ENCODE measurements at regions of chr1 and their contacts with region 1.

Region 1: DNA sequence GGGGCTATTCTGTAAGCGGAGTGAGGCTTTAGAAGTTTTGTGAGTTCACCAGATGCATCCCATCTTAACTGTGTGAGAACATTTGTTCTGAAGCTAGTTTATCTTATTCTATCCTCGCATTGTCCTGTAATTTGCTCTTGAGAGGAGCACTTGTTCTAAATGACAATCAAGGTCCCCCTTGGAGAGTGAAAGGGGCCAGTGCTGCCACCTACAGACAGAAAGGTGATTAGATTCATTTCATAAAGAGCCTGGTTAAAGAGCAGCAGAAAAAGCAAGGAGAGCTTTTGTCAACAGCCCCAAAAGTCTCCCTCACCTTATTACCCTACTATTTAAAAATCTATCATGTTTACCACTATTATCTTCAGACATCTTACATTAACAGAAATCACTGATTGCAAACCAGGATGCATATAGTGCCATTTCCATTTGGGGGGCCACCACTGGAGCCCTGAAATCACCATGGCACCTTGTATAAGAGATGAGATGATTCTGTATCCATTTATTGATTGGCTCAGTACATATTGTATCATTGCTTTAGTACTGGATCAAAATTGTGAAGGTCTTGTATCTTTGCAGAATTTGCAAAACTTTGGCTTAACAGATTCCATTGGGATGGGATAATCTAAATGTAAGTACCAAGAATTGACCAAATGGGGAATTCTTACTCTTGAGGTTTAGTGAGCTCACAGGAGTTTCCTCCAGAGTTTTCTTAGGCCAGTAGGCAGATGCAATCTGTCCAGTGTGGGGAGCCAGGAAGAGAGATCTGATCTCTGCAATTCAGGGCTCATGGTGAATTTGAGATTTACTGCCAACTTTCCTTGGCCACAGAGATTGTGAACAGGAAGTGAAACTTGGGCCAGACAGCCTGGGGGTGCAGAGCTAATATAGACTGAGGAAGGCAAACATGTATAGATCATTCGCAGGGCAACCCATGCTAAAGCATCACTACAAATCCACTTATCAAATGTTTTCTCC is 64.3 kb upstream of the TRABD2B start:
- DNase-seq: no peak
- H3K4me3 ChIP-seq: no peak overlapping the region
- H3K27ac ChIP-seq: no peak overlapping the region
- H3K4me1 ChIP-seq: peaks cover 0 to 12% (median 2%) of the 10 kb centered on the region in 6 donors
- H3K27me3 ChIP-seq: peaks cover 0 to 6% (median 0%) of the 10 kb centered on the region in 7 donors
- CTCF ChIP-seq: peak in 8 of 11 experiments; percentile 16 to 68 (median 52)
- POLR2A ChIP-seq: no peak

Region 2: DNA sequence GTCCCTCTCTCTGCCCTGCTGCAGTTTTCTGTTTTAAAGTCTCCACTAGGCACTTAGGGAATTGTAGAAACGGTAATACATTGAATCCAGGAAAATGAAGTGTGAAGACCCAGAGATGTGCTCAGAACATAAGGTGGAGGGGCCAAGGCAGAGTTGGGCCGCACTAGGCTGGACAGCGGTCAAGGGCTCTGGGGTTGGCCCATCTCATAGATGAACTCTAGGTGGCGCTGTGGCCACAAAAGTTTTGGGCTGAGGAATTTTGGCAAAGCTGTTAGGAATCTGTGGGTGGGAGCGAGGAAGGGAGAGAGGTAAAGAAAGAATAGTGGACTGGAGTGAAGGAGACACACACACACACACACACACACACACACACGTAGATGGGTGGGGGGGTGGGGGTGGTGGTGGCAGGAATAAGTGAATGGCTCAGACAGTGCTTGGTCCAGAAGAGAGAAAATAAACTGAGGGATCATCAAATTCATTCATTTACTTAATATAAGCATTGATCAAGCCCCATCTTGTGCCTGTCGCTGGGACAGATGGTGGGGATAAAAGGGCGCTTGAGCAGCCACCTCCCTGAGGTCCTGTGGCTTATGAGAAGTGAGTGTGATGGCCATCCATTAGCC is 322.8 kb before region 1 on chr1:
- intact Hi-C with region 1: loop called (anchors 10 kb)
- DNase-seq: no peak
- H3K4me3 ChIP-seq: no peak overlapping the region
- H3K27ac ChIP-seq: no peak overlapping the region
- H3K4me1 ChIP-seq: no peaks in the 10 kb centered on the region
- H3K27me3 ChIP-seq: peaks cover 0 to 59% (median 2%) of the 10 kb centered on the region in 7 donors
- CTCF ChIP-seq: peak in 9 of 11 experiments; percentile 20 to 74 (median 59)
- POLR2A ChIP-seq: no peak

Region 3: DNA sequence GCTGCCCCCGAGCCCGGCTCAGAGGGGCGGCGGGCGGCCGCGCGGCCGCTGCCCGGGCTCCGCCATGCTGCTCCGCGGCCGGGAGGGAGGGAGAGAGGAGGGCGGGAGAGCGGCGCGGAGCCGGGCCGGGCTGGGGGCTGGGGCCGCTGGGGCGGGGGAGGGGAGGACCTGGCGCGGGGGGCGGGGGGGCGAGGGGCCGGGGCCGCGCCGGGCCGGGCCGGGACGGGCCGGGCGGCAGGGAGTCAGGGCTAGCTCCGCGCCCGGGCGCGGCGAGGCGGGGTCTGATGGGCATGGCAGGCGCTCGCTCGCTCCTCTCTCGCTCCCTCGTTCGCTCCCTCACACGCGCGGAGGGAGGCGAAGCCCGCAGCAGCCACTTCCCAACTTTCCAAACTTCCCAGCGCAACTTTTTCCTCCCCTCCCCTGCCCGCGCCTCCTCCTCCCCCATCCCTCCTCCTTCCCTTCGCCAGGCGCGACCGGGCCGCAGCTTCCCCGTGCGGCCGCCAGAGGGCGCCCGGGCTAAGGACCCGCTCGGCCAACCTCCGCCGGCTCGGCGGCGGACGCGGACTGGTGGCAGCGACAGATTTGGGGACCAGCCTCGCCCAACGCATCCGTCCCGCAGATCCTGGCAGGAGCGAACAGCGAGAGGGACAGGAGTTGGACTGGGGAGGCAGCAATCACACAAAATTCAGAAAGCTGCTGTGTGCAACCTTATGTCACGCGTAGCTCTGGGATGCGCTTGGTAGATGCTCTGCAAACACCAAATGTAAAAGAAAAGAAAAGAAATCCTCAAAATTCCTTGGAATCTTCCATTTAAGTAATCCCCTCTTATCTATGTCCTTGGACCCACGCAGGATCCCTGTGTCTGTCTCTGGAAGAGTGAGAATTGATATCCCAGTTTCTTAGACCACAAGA is 63.9 kb before region 1 on chr1 and contains the start of gene TRABD2B:
- intact Hi-C with region 1: loop called (anchors 5 kb)
- DNase-seq: peak; percentile 94
- H3K4me3 ChIP-seq: peak within 1 kb of the TSS; percentile 29 to 75 (median 44)
- H3K27ac ChIP-seq: peak within 1 kb of the TSS in 3 of 8 donors; percentile 42 to 74 (median 72)
- H3K4me1 ChIP-seq: peaks cover 3 to 21% (median 14%) of the 10 kb centered on the region in 6 donors
- H3K27me3 ChIP-seq: peaks cover 7 to 96% (median 29%) of the 10 kb centered on the region in 7 donors
- CTCF ChIP-seq: peak; percentile 71 to 98 (median 94)
- POLR2A ChIP-seq: no peak
- total RNA-seq, gene TRABD2B: 0.30 to 3.5 (median 1.8) TPM

Measured in spleen (tissue), 13 donors.